ENCODE measurements at regions of chr11 and their contacts with region 1.

Region 1: DNA sequence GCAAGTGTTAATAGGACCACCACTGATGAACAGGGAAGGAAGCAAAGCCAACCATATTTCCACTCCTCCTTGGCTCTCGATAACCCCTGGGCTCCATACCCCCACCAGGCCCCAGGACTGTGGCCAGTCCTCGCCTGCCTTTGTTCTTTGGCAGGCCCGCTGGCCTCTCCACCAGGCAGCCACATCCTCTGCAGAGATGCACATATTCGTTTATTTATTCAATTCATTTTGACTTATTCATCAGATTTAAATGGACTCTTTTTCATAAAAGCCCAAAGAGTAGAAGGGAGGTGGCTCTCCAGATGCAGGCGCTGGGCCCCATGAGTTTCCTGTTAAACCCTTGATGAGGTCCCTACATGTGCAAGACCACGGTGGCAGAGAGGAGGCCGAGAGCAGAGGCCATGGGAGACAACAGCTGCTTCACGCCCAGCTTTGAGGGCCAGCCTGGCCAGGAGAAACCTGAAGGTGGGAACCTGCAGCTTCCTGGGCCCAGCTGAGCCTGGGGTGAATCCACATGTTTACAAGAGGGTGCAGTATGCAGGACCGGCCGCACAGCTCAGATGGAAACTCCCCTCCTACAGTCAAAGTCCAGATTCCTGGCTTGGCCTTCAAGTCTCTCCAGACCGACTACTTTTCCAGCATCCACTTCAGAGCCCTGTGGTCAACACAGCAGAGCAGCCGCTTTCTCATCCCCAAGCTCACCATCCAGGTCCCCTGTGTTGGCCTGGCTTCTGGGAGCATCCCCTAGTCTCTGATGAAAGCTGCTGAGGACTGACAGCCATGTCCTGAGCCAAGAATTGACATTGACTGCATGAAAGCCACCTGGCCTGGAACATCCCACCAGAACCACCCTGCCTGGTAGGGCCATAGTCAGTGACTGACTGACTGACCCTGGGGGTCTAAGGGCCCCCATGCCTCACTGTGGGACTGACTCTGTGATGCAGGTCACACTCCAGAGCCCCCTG is 39.7 kb upstream of the CCND1 start:
- DNase-seq: peak; percentile 83 to 92
- H3K4me3 ChIP-seq: no peak overlapping the region
- H3K4me3 Mint-ChIP-seq: peak overlapping the region; percentile 24
- H3K27ac Mint-ChIP-seq: peak overlapping the region; percentile 77
- H3K4me1 ChIP-seq: peaks cover 24% of the 10 kb centered on the region
- H3K4me1 Mint-ChIP-seq: peaks cover 33% of the 10 kb centered on the region
- H3K27me3 ChIP-seq: no peaks in the 10 kb centered on the region
- H3K27me3 Mint-ChIP-seq: no peaks in the 10 kb centered on the region
- CTCF ChIP-seq: no peak

Region 2: GRCh38 chr11:69274531-69275255 is 326.6 kb before region 1 on chr11:
- CTCF ChIA-PET with region 1: no interaction called
- POLR2A ChIA-PET with region 1: interaction called, 13 read pairs
- intact Hi-C with region 1: no loop called
- DNase-seq: peak; percentile 96 to 98
- H3K4me3 ChIP-seq: no peak overlapping the region
- H3K4me3 Mint-ChIP-seq: peak overlapping the region; percentile 3
- H3K27ac Mint-ChIP-seq: peak overlapping the region; percentile 5
- H3K4me1 ChIP-seq: peaks cover 51% of the 10 kb centered on the region
- H3K4me1 Mint-ChIP-seq: peaks cover 19% of the 10 kb centered on the region
- H3K27me3 ChIP-seq: no peaks in the 10 kb centered on the region
- H3K27me3 Mint-ChIP-seq: no peaks in the 10 kb centered on the region
- CTCF ChIP-seq: no peak

Region 3: DNA sequence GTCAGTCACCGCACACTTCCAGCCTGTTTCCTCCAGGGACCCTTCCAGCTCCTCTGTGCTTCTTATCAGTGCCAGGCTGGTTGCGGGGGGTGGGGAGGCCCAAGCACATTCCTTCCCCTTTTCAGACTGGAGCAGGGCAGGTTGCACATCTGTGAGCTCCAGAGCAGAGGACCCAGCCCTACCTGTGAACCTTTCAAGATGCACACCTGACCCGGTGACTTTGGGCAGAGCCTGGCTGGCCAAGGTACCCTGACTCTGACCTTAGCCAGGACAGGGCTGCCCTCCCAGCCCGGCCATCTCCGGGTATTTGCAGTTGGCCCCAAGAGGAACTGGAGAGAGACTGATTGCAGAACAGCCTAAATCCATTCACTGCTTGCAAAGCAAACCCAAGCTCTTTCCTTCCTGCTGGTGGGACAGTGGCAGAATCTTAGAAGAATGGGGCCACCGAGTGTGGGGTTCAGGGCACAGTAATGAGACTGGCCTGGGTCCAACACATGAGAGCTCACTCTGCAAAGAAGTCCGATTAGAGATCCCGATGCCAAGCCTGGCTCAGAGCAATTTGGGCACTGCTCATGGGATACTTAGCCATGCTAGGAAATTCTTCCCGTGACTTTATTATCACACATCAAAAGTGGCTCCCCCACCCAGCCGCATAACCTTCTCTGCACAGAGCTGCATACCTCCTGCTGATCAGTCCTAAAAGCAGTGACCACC is 25.1 kb before region 1 on chr11:
- CTCF ChIA-PET with region 1: no interaction called
- POLR2A ChIA-PET with region 1: no interaction called
- intact Hi-C with region 1: loop called (anchors 1 kb)
- DNase-seq: peak; percentile 54 to 68
- H3K4me3 ChIP-seq: no peak overlapping the region
- H3K4me3 Mint-ChIP-seq: no peak overlapping the region
- H3K27ac Mint-ChIP-seq: no peak overlapping the region
- H3K4me1 ChIP-seq: peaks cover 20% of the 10 kb centered on the region
- H3K4me1 Mint-ChIP-seq: peaks cover 10% of the 10 kb centered on the region
- H3K27me3 ChIP-seq: no peaks in the 10 kb centered on the region
- H3K27me3 Mint-ChIP-seq: no peaks in the 10 kb centered on the region
- CTCF ChIP-seq: no peak

Region 4: GRCh38 chr11:69636312-69637197 is 35.3 kb after region 1 on chr11:
- CTCF ChIA-PET with region 1: no interaction called
- POLR2A ChIA-PET with region 1: interaction called, 10 read pairs
- intact Hi-C with region 1: loop called (anchors 1 kb)
- DNase-seq: peak; percentile 97 to 98
- H3K4me3 ChIP-seq: peak overlapping the region; percentile 73
- H3K4me3 Mint-ChIP-seq: peak overlapping the region; percentile 96
- H3K27ac Mint-ChIP-seq: peak overlapping the region; percentile 97
- H3K4me1 ChIP-seq: peaks cover 19% of the 10 kb centered on the region
- H3K4me1 Mint-ChIP-seq: peaks cover 25% of the 10 kb centered on the region
- H3K27me3 ChIP-seq: no peaks in the 10 kb centered on the region
- H3K27me3 Mint-ChIP-seq: no peaks in the 10 kb centered on the region
- CTCF ChIP-seq: no peak